ENCODE measurements at regions of chr9 and their contacts with region 1.

Region 1: DNA sequence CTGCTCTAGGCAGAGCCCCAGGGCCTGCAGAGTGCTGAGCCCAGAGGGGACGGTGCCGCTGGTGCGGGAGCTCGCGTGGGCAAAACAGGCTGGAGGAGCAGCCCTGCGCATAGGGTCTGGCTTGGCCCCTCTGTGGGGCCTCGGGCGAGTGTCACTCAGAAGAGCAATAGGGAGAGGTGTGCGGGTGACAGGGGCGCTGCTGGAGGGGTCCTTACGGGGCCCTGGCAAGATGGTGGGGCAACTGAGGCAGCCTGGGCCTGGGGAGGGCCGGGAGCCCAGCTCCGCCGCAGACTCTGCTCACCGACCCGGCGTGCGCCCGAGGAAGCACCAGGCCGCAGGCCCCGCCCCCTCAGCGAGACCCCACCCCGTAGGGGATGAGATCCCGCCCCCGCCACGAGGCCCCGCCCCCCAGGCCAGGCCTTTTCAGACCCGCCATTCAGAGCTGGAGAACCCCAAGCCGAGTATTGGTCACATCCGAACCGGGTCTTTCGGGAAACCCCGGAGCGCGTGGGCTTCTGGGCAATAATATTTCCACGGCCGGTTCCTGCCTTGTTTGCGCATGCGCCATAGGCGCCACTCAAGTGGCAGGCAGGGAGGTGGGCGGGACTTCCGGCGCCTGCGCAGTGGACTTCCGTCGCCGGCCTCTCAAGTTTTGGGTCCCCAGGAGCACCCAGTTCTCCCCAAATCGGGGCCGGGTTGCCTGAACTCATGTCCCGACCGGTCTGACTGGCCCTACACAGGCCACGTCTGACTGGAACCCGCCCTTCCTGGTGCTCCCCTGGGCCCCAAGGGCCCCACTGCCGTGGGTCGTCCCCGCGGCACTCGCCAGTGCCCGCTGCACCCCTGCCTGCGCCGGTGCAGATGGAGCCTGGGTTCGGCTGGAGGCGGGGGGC is 1.3 kb upstream of the RNF208 start:
- DNase-seq: peak; percentile 97
- ATAC-seq: peak; percentile 93
- H3K4me3 Mint-ChIP-seq: peak overlapping the region; percentile 83
- H3K27ac Mint-ChIP-seq: peak overlapping the region; percentile 73
- H3K4me1 Mint-ChIP-seq: peaks cover 20% of the 10 kb centered on the region
- H3K27me3 Mint-ChIP-seq: peaks cover 2% of the 10 kb centered on the region
- CTCF ChIP-seq: no peak

Region 2: GRCh38 chr9:136944519-136945279 is 278.6 kb before region 1 on chr9 and contains the starts of genes C8G and FBXW5:
- CTCF ChIA-PET with region 1: no interaction called
- POLR2A ChIA-PET with region 1: no interaction called
- intact Hi-C with region 1: loop called (anchors 10 kb)
- DNase-seq: peak; percentile 97
- ATAC-seq: peak; percentile 90
- H3K4me3 Mint-ChIP-seq: peak within 1 kb of the TSS; percentile 80
- H3K27ac Mint-ChIP-seq: peak within 1 kb of the TSS; percentile 79
- H3K4me1 Mint-ChIP-seq: peaks cover 9% of the 10 kb centered on the region
- H3K27me3 Mint-ChIP-seq: no peaks in the 10 kb centered on the region
- CTCF ChIP-seq: peak; percentile 48
- total RNA-seq, gene C8G: 0.69 and 3.4 TPM in 2 replicates
- total RNA-seq, gene FBXW5: 81.5 and 82.1 TPM in 2 replicates

Region 3: DNA sequence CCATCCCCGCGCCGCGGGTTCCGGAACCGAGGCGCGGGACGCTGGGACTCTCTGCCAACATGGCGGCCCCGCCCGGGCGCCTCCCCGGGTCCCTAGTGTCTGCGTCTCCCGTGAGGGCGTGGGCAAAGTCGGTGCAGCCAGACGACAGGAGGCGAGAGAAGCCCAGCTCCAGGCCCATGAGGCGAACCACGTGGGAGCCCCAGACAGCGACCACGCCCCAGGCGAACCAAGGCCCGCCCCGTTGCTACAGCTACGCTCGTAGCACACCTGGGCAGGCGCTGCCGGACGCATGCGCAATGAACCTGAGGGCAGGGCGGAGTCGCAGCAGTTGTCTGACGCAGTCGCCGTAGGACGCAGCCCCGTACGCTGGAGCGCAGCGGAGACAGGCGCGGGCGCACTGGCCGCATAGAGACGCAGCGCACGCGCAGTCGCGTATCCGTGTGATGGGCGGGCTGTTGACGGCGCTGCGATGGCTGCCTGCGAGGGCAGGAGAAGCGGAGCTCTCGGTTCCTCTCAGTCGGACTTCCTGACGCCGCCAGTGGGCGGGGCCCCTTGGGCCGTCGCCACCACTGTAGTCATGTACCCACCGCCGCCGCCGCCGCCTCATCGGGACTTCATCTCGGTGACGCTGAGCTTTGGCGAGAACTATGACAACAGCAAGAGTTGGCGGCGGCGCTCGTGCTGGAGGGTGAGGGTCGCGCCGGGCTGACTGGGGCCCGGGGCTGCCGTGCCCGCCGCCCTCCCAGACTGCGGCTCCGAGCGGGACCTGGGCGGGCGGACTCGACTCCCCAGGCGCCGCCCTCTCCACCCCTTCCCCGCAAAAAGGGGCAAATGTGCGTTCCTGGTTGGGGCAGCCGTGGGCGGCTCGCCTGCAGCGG is 136.6 kb before region 1 on chr9 and contains the start of gene MAN1B1:
- CTCF ChIA-PET with region 1: interaction called, 3 read pairs
- POLR2A ChIA-PET with region 1: interaction called, 10 read pairs
- intact Hi-C with region 1: loop called (anchors 1 kb)
- DNase-seq: peak; percentile 98
- ATAC-seq: peak; percentile 77
- H3K4me3 Mint-ChIP-seq: peak within 1 kb of the TSS; percentile 93
- H3K27ac Mint-ChIP-seq: peak within 1 kb of the TSS; percentile 97
- H3K4me1 Mint-ChIP-seq: peaks cover 49% of the 10 kb centered on the region
- H3K27me3 Mint-ChIP-seq: no peaks in the 10 kb centered on the region
- CTCF ChIP-seq: no peak
- total RNA-seq, gene MAN1B1: 33.6 and 37.7 TPM in 2 replicates

Region 4: DNA sequence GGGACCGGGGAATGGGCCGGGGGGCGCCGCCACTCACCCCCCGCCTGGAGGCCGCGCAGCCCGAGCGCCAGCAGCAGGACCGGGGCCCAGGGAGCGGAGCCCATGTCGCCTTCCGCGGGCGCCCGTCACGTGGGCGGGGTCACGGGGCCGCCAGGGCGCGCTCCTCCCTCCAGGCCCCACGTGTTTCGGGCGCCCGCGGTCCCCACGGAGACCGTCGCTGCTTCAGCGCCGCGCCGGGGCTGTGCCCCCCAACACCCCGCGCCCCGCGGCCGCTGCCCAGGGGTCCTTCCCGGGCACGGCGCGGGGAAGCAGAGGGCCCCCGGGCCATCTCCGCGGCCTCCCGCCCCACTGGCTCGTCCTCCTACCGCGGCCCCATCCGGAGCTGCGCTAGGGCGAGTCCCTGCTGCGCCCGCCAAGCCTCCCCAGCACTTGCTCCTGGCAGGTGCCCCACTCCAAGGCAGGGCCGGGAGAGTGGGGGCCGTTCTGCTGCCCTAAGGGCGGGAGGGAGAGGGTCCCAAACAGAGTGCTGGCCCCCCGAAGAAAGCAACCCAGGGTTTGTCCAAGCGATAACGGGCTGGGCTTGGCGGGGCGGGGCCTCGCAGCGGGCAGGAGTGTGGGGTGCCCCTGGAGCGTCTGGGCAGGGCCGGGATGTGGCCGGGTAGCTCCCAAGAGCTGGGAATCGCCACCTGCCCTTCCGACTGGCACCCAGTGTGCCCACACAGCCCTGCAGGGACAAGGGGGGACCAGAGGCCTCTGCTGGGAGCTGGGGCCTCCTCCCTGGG is 108.5 kb before region 1 on chr9 and contains the start of gene DPP7:
- CTCF ChIA-PET with region 1: interaction called, 11 read pairs
- POLR2A ChIA-PET with region 1: interaction called, 14 read pairs
- intact Hi-C with region 1: loop called (anchors 1 kb)
- DNase-seq: peak; percentile 84
- ATAC-seq: peak; percentile 91
- H3K4me3 Mint-ChIP-seq: peak within 1 kb of the TSS; percentile 74
- H3K27ac Mint-ChIP-seq: no peak within 1 kb of the TSS
- H3K4me1 Mint-ChIP-seq: peaks cover 21% of the 10 kb centered on the region
- H3K27me3 Mint-ChIP-seq: no peaks in the 10 kb centered on the region
- CTCF ChIP-seq: no peak
- total RNA-seq, gene DPP7: 254 and 259 TPM in 2 replicates

Region 5: DNA sequence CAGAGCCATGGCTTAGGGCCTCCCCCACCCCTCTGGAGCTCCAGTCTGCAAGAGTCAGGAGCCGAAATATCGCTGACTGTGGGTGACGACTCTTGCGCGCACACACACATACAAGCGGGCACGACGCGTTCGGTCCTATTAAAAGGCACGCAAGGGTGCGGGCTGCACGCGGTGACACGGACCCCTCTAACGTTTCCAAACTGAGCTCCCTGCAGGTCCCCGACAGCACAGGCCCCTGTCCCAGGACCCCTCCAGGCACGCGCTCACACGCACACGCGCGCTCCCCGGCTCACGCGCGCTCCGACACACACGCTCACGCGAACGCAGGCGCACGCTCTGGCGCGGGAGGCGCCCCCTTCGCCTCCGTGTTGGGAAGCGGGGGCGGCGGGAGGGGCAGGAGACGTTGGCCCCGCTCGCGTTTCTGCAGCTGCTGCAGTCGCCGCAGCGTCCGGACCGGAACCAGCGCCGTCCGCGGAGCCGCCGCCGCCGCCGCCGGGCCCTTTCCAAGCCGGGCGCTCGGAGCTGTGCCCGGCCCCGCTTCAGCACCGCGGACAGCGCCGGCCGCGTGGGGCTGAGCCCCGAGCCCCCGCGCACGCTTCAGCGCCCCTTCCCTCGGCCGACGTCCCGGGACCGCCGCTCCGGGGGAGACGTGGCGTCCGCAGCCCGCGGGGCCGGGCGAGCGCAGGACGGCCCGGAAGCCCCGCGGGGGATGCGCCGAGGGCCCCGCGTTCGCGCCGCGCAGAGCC is 84.4 kb before region 1 on chr9 and contains the start of gene GRIN1:
- CTCF ChIA-PET with region 1: no interaction called
- POLR2A ChIA-PET with region 1: interaction called, 13 read pairs
- intact Hi-C with region 1: no loop called
- DNase-seq: no peak
- ATAC-seq: peak; percentile 56
- H3K4me3 Mint-ChIP-seq: no peak within 1 kb of the TSS
- H3K27ac Mint-ChIP-seq: no peak within 1 kb of the TSS
- H3K4me1 Mint-ChIP-seq: peaks cover 3% of the 10 kb centered on the region
- H3K27me3 Mint-ChIP-seq: peaks cover 56% of the 10 kb centered on the region
- CTCF ChIP-seq: no peak
- total RNA-seq, gene GRIN1: 0.22 TPM in 1 of 2 replicates, not detected in the other

Region 6: GRCh38 chr9:137188490-137189296 is 34.6 kb before region 1 on chr9 and contains the starts of genes ANAPC2 and SSNA1:
- CTCF ChIA-PET with region 1: interaction called, 13 read pairs
- POLR2A ChIA-PET with region 1: interaction called, 40 read pairs
- intact Hi-C with region 1: loop called (anchors 1 kb)
- DNase-seq: peak; percentile 99
- ATAC-seq: peak; percentile 79
- H3K4me3 Mint-ChIP-seq: peak within 1 kb of the TSS; percentile 92
- H3K27ac Mint-ChIP-seq: peak within 1 kb of the TSS; percentile 91
- H3K4me1 Mint-ChIP-seq: peaks cover 36% of the 10 kb centered on the region
- H3K27me3 Mint-ChIP-seq: no peaks in the 10 kb centered on the region
- CTCF ChIP-seq: no peak
- total RNA-seq, gene ANAPC2: 75.7 and 93.9 TPM in 2 replicates
- total RNA-seq, gene SSNA1: 71.9 and 76.8 TPM in 2 replicates

Region 7: DNA sequence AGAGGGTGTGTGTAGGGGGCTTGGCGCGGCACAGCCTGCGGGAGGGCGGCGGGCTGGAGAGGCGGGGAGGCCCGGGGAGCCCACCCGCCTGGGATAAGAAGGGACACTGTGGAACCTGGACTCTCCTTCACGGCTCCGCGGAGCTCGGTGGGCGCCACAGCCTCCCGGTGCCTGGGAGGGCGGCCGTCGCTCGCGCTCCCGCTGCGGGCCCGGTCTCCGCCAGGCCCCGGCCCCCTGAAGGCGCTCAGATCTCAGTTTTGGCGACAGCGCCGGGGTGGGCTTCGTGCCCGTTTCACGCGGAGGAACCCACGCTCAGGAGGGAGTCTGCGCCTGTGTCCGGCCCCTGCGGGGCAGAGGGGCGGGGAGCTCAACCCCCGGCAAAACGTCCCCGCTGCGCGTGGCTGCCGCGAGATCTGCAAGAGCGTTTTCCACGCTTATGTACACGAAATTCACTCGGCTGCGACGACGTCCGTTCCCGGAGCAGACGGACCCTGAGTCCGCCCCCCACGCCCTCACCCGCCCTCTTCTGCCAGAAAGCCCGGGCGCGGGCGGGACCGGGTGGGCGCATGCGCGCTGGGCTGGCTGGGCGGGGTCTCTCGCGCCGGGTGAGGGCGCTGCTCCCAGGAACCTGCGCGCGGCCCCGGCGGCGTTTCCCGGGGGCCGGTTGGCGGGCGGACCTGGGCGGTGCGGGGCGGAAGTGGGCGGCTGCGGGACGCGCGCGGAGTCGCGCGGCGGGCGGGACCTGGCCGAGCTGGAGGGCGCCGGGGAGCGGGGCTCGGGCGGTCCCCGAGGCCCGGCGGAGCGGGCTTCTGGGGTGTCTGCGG is 31.5 kb after region 1 on chr9 and contains the start of gene NELFB:
- CTCF ChIA-PET with region 1: no interaction called
- POLR2A ChIA-PET with region 1: interaction called, 13 read pairs
- intact Hi-C with region 1: no loop called
- DNase-seq: peak; percentile 100
- ATAC-seq: peak; percentile 90
- H3K4me3 Mint-ChIP-seq: peak within 1 kb of the TSS; percentile 90
- H3K27ac Mint-ChIP-seq: peak within 1 kb of the TSS; percentile 72
- H3K4me1 Mint-ChIP-seq: peaks cover 19% of the 10 kb centered on the region
- H3K27me3 Mint-ChIP-seq: no peaks in the 10 kb centered on the region
- CTCF ChIP-seq: no peak
- total RNA-seq, gene NELFB: 56.1 and 58.2 TPM in 2 replicates

Region 8: DNA sequence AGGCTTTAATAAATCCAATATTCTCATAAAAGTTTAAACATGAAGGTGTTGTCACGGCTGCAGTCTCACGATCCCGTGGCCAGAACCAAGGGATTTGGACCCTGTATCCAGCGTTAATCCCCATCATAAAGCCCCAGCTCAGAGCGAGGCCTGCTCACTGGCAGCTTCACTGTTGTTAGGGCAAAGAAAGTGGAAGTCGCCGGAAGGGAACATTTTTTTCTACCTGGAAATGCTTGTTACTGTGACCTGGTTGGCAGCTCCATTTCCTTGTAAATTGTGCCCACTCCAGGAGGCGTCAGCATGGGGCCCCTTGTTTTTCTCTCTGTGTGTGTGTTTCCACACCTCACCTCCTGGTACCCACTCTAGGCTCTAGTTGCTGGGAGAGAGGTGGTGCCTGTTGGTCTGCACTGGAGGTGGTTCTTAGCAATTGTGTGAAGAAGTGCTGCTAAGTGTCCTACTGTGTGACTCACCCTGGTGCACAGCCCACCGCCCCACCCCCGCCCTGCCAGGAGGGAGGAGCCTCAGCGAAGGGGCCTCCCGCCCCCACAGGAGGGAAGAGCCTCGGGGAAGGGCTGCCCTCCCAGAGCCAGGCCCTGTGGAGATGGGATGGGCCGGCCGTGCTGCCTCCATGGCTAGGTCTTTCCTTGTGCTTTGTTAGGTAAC is 500.6 kb after region 1 on chr9:
- CTCF ChIA-PET with region 1: no interaction called
- POLR2A ChIA-PET with region 1: no interaction called
- intact Hi-C with region 1: no loop called
- DNase-seq: no peak
- ATAC-seq: no peak
- H3K4me3 Mint-ChIP-seq: no peak overlapping the region
- H3K27ac Mint-ChIP-seq: peak overlapping the region; percentile 91
- H3K4me1 Mint-ChIP-seq: peaks cover 37% of the 10 kb centered on the region
- H3K27me3 Mint-ChIP-seq: no peaks in the 10 kb centered on the region
- CTCF ChIP-seq: no peak